K562 (cell line): ENCODE measurements at regions of chr2 and their contacts with region 1.

Region 1: DNA sequence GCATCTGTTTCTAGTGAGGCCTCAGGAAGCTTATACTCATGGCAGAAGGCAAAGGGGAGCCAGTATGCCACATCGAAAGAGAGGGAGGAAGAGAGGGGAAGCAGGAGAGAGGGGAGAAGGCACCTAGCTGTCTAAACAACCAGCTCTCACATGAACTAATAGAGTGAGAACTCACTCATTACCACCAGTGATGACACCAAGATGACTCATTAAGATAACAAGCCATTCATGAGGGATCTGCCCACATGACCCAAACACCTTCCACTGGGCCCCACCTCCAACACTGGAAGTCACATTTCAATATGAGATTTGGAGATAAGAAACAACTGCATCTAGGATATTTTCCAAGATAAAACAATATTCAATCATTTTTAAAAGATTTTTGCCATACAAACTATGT is 753.9 kb upstream of the ZEB2 start:
- DNase-seq: no peak
- ATAC-seq: no peak
- H3K4me3 ChIP-seq: no peak overlapping the region
- H3K27ac ChIP-seq: no peak overlapping the region
- H3K4me1 ChIP-seq: no peaks in the 10 kb centered on the region
- H3K27me3 ChIP-seq: no peaks in the 10 kb centered on the region
- CTCF ChIP-seq: no peak
- EP300 ChIP-seq: no peak
- POLR2A ChIP-seq: no peak
- RAD21 ChIP-seq: no peak

Region 2: GRCh38 chr2:145984541-145984940 is 710.7 kb after region 1 on chr2:
- CTCF ChIA-PET with region 1: no interaction called
- POLR2A ChIA-PET with region 1: no interaction called
- in situ Hi-C with region 1: no loop called
- intact Hi-C with region 1: loop called (anchors 10 kb)
- DNase-seq: peak in 2 of 4 experiments; percentile 5 to 8
- ATAC-seq: no peak
- H3K4me3 ChIP-seq: no peak overlapping the region
- H3K27ac ChIP-seq: no peak overlapping the region
- H3K4me1 ChIP-seq: no peaks in the 10 kb centered on the region; a peak in 1 of 5 replicates
- H3K27me3 ChIP-seq: no peaks in the 10 kb centered on the region
- CTCF ChIP-seq: no peak
- EP300 ChIP-seq: no peak; the same call in 1 of the 2 replicates
- POLR2A ChIP-seq: no peak
- RAD21 ChIP-seq: no peak